Adrenal gland (tissue), 19 donors: ENCODE measurements at regions of chr22 and their contacts with region 1.

Region 1: DNA sequence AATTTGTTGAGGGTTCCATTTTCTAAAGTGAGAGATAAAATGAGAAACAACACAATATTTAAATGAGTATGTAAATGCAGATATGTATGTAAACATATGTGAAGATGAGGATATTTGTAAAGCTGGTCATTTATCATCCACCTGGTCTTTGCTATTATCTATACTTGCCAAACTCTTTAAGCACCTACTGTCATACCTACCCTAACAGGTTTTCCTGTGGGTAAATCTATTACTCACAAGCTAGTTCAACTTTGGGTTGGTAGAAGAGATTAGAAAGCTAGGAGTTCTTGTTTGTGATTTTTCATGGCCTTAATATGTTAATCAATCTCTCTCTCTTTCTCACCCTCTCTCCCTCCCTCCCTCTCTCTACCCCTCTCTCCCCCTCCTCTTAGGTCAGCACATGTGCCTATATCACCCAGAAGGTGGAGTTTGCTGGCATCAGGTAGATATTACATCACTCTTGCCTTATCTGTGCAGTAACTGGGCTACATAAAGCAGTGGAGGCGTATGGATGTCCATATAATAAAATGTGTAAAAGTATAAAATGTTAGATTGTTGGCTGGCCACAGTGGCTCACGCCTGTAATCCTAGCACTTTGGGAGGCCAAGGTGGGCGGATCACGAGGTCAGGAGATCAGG is 14.7 kb downstream of the DEPDC5 start:
- DNase-seq: peak in 1 of 7 donors; percentile 1
- H3K4me3 ChIP-seq: no peak overlapping the region
- H3K27ac ChIP-seq: no peak overlapping the region
- H3K4me1 ChIP-seq: no peaks in the 10 kb centered on the region
- H3K27me3 ChIP-seq: no peaks in the 10 kb centered on the region
- CTCF ChIP-seq: no peak
- POLR2A ChIP-seq: no peak

Region 2: GRCh38 chr22:31272522-31273446 is 495.8 kb before region 1 on chr22:
- intact Hi-C with region 1: no loop called
- DNase-seq: peak in 6 of 7 donors; percentile 58 to 85 (median 72)
- H3K4me3 ChIP-seq: no peak overlapping the region
- H3K27ac ChIP-seq: no peak overlapping the region
- H3K4me1 ChIP-seq: no peaks in the 10 kb centered on the region
- H3K27me3 ChIP-seq: no peaks in the 10 kb centered on the region
- CTCF ChIP-seq: peak; percentile 63 to 82 (median 73)
- POLR2A ChIP-seq: no peak

Region 3: GRCh38 chr22:31646186-31647089 is 122.1 kb before region 1 on chr22:
- intact Hi-C with region 1: no loop called
- DNase-seq: peak; percentile 57 to 89 (median 84)
- H3K4me3 ChIP-seq: no peak overlapping the region
- H3K27ac ChIP-seq: peak overlapping the region; percentile 34 to 87 (median 78)
- H3K4me1 ChIP-seq: peaks cover 16 to 21% of the 10 kb centered on the region in 2 donors
- H3K27me3 ChIP-seq: no peaks in the 10 kb centered on the region
- CTCF ChIP-seq: no peak
- POLR2A ChIP-seq: peak in 1 of 2 donors; percentile 35

Region 4: DNA sequence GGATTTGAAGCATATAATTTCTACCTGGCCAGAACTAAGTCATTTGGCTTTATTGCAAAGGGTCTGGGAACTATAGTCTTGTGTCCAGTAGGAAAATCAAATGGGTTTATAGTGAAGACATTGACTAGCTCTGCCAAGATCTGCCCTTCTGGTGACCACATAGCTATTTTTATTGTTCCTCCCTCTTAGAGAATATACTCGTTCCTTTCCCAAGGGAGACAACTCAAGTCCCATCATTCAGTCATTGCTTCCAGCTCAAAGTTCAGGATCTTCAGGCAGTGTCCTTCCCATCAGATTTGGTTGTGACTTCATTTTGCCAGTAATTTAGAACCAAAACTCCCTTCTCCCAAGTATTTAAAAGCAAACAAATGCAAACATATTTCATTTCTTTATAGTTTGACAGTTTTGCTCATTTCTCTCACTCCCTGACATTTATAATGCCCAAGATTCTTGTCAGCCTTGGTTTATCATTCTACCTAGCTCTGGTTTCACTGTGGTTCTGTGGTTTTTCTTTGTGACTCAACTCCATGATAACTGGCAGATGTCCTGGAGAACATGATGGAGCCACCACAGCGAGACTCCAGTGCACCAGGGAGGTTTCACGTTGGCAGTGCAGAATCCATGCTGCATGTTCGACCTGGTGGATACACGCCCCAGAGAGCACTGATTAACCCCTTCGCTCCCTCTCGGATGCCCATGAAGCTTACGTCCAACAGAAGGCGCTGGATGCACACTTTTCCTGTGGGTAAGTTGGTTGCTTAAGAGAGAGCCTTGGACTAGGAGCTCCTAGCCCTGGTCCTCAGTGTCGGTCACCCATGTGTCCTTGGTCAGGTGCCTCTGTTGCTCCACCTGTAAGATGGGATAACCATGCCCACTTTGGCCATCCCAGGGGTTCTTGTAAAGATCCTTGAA is 50.2 kb after region 1 on chr22:
- intact Hi-C with region 1: loop called in 1 of 2 experiments (anchors 10 kb)
- DNase-seq: no peak
- H3K4me3 ChIP-seq: no peak overlapping the region
- H3K27ac ChIP-seq: no peak overlapping the region
- H3K4me1 ChIP-seq: no peaks in the 10 kb centered on the region
- H3K27me3 ChIP-seq: no peaks in the 10 kb centered on the region
- CTCF ChIP-seq: no peak
- POLR2A ChIP-seq: no peak